Activated naive CD4-positive, alpha-beta T cell treated with anti-CD3 and anti-CD28 coated beads for 36 hours (primary cell): ENCODE measurements at regions of chr12 and their contacts with region 1.

Region 1: DNA sequence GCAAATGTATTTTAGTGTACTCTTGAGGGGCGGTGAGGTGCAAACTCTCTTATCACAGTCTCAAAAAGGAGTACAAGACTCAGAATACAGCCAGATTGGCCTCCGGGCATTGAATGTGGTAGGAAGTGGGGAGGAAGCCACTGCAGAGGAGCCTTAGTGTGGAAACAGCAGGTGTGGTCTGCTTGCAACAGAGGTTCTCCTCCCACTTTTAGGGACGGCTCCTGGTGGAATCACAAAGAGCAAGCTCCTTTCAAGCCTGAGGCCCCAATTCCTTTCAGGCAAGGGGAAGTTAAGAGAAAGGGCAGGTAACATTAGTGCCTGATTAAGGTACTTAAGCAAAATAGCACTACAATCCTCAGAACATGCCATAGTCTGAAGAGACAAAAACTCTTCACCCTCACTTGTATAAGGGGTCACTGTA is 23.7 kb upstream of the SLC2A3 start:
- DNase-seq: peak; percentile 68
- H3K4me3 Mint-ChIP-seq: peak overlapping the region; percentile 86
- H3K27ac Mint-ChIP-seq: peak overlapping the region; percentile 93
- H3K4me1 Mint-ChIP-seq: peaks cover 37% of the 10 kb centered on the region
- H3K27me3 Mint-ChIP-seq: no peaks in the 10 kb centered on the region

Region 2: DNA sequence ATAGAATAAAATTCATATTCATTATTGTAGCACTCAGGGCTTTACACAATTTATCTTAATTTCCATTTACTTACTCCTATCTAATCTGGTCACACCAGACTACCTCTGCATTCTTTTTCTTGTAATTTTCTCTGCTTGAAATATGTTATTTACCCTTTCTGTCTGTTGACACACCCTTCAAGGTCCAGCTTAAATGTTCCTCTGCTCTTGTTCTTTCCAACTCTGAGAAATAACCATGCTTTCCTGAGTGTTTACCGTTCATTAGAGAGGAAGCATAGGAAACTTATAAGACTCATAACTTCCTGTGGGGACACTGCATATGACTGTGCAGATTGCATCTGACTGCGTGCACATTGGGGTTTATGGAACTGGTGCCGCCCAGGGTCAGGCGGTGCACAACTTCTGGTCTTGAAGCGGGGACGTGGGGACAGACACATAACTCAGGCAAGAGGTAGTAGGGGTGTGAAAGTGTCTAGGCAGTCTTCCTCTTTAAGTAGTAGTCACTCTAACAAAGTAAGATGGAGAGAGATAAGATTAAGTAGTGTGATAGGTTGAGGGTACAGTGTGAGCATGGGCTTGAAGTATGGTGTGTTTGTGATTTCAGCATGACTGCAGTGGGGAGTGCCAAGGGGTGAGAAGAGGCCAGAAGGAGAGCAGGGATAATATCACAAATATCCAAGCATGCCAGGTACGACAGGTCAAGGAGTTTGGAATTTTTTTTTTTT is 30.3 kb after region 1 on chr12:
- CTCF ChIA-PET with region 1: interaction called, 17 read pairs
- intact Hi-C with region 1: loop called (anchors 1 kb)
- DNase-seq: peak; percentile 84
- H3K4me3 Mint-ChIP-seq: peak overlapping the region; percentile 41
- H3K27ac Mint-ChIP-seq: peak overlapping the region; percentile 82
- H3K4me1 Mint-ChIP-seq: peaks cover 26% of the 10 kb centered on the region
- H3K27me3 Mint-ChIP-seq: no peaks in the 10 kb centered on the region

Region 3: DNA sequence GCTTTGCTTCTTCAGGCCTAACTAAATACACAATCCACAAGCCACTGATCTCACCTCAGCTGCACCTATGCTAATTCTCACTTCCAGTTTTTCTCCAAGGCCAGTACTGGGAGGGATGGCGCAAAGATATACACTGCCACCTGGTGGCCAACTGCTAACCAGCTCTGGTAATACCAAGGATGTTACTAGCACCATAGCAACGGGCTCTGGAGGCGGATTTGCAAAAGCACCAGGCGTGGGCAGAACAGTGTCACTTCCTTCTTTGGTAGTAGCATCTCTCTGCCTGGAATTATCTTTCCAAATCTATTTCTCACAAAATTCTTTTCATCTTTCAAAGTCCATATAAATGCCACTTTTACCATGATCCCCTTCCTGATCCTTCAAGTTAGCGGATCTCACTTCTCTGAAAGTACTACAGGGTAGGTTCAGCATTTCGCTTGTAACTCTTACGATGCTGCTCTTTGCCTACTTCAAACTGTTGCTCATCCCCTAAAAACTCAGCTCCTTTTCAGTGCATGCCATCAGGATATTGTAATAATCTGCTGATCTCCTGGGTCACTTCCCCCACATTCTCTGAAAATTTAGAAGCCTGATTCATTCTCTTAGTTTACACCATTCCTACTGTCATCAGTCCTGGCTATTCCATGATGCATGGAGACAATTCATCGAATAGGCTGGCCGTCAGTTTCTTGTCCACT is 35.7 kb after region 1 on chr12:
- CTCF ChIA-PET with region 1: interaction called, 17 read pairs
- intact Hi-C with region 1: loop called (anchors 1 kb)
- DNase-seq: peak; percentile 95
- H3K4me3 Mint-ChIP-seq: no peak overlapping the region
- H3K27ac Mint-ChIP-seq: no peak overlapping the region
- H3K4me1 Mint-ChIP-seq: peaks cover 13% of the 10 kb centered on the region
- H3K27me3 Mint-ChIP-seq: no peaks in the 10 kb centered on the region

Region 4: DNA sequence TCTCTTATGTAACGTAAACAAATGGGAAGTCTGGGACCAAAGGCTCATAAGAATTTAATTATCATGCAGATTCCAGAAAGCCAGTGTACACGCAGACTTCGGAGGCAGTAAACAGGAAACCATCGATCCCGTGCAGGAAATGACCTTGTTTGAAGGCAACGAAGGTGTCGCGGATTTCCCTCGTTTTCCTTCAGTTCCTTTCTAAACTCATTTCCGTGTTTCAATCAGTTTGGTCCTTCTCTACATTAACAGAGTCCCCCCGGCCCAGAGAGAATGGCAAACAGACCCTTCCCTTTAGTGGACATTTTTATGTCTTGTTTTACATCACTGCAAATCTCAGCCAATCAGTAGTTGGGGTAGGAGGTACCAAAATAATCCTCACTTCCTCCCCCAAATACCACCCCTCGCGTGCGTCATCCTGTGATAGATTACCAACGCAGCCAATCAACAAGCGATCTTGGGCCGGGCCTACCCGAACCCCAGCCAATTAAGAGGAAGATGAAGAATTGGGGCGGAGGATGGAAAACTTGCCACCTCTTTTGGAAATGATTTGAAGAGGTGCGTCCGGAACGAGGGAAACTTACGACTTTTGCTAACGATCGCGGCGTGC is 66.7 kb after region 1 on chr12:
- CTCF ChIA-PET with region 1: no interaction called
- intact Hi-C with region 1: loop called (anchors 1 kb)
- DNase-seq: peak; percentile 99
- H3K4me3 Mint-ChIP-seq: peak overlapping the region; percentile 94
- H3K27ac Mint-ChIP-seq: peak overlapping the region; percentile 100
- H3K4me1 Mint-ChIP-seq: peaks cover 11% of the 10 kb centered on the region
- H3K27me3 Mint-ChIP-seq: no peaks in the 10 kb centered on the region